Ovary (tissue), 10 donors: ENCODE measurements at regions of chr2 and their contacts with region 1.

Region 1: GRCh38 chr2:219521066-219521880 is 7.0 kb downstream of the ASIC4 start:
- DNase-seq: no peak
- H3K4me3 ChIP-seq: no peak overlapping the region
- H3K27ac ChIP-seq: no peak overlapping the region
- H3K4me1 ChIP-seq: no peaks in the 10 kb centered on the region
- H3K27me3 ChIP-seq: no peaks in the 10 kb centered on the region
- CTCF ChIP-seq: peak in 2 of 3 donors; percentile 44 to 48
- EP300 ChIP-seq: no peak
- POLR2A ChIP-seq: no peak

Region 2: DNA sequence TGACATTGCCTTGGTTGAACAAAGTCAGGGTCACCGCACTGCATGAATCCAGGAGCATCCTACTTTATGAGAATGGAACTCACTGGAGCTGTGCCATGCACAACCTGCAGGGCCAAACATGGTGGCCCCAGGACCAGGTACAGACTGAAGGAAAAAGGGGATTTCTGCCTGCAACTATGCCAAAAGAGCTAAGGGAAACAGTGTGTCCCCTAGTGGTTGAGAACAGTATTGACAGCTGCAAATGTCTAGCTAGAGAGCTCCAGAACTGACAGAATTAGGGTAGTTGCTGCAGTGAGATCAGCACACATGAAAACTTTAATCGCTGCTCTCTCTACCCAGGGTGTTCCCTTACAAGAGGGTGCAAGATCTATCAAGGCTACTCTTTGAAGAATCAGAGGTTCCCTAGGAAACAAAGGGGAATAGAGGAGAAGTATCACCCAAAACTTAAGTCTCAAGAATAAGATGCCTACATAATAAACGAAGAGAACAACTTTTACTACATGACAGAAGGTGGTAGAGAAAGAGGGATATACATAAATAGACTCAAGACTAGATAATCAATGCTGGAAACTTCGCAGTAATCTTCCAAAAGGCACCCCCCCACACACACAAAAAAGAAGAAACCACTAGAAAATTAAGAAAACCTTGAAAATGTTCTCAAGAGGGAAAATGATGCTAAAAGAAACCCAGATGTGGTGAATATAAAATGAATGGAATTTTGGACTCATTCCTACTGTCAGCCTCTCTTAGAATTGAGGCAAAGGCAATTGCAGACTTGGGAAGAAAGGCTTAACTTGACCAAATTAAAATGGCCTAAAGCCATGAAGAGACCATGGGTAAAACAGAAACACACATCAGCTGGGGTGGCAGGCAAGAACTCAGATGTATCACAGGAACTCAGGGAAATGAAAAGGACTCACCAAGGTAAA is 416.9 kb before region 1 on chr2:
- intact Hi-C with region 1: no loop called
- DNase-seq: no peak
- H3K4me3 ChIP-seq: no peak overlapping the region
- H3K27ac ChIP-seq: no peak overlapping the region
- H3K4me1 ChIP-seq: no peaks in the 10 kb centered on the region
- H3K27me3 ChIP-seq: no peaks in the 10 kb centered on the region
- CTCF ChIP-seq: no peak
- EP300 ChIP-seq: no peak
- POLR2A ChIP-seq: no peak

Region 3: GRCh38 chr2:219278655-219279516 is 242.4 kb before region 1 on chr2 and contains the start of gene DNAJB2:
- intact Hi-C with region 1: loop called in 2 of 4 experiments (anchors 10 kb)
- DNase-seq: peak; percentile 99 to 100 (median 99)
- H3K4me3 ChIP-seq: peak within 1 kb of the TSS; percentile 53
- H3K27ac ChIP-seq: peak within 1 kb of the TSS; percentile 98
- H3K4me1 ChIP-seq: peaks cover 8% of the 10 kb centered on the region
- H3K27me3 ChIP-seq: no peaks in the 10 kb centered on the region
- CTCF ChIP-seq: no peak
- EP300 ChIP-seq: peak; percentile 82
- POLR2A ChIP-seq: peak; percentile 87
- total RNA-seq, gene DNAJB2: 34.0 to 101 (median 85.7) TPM

Region 4: GRCh38 chr2:219470429-219470828 is 50.8 kb before region 1 on chr2:
- intact Hi-C with region 1: loop called in 2 of 4 experiments (anchors 5 to 10 kb)
- DNase-seq: no peak
- H3K4me3 ChIP-seq: no peak overlapping the region
- H3K27ac ChIP-seq: no peak overlapping the region
- H3K4me1 ChIP-seq: no peaks in the 10 kb centered on the region
- H3K27me3 ChIP-seq: no peaks in the 10 kb centered on the region
- CTCF ChIP-seq: no peak
- EP300 ChIP-seq: no peak
- POLR2A ChIP-seq: no peak

Region 5: GRCh38 chr2:219475697-219476651 is 45.3 kb before region 1 on chr2:
- intact Hi-C with region 1: loop called in 2 of 4 experiments (anchors 5 to 10 kb)
- DNase-seq: peak; percentile 68 to 86 (median 82)
- H3K4me3 ChIP-seq: no peak overlapping the region
- H3K27ac ChIP-seq: no peak overlapping the region
- H3K4me1 ChIP-seq: peaks cover 3% of the 10 kb centered on the region
- H3K27me3 ChIP-seq: no peaks in the 10 kb centered on the region
- CTCF ChIP-seq: peak; percentile 76 to 82 (median 80)
- EP300 ChIP-seq: no peak
- POLR2A ChIP-seq: no peak

Region 6: DNA sequence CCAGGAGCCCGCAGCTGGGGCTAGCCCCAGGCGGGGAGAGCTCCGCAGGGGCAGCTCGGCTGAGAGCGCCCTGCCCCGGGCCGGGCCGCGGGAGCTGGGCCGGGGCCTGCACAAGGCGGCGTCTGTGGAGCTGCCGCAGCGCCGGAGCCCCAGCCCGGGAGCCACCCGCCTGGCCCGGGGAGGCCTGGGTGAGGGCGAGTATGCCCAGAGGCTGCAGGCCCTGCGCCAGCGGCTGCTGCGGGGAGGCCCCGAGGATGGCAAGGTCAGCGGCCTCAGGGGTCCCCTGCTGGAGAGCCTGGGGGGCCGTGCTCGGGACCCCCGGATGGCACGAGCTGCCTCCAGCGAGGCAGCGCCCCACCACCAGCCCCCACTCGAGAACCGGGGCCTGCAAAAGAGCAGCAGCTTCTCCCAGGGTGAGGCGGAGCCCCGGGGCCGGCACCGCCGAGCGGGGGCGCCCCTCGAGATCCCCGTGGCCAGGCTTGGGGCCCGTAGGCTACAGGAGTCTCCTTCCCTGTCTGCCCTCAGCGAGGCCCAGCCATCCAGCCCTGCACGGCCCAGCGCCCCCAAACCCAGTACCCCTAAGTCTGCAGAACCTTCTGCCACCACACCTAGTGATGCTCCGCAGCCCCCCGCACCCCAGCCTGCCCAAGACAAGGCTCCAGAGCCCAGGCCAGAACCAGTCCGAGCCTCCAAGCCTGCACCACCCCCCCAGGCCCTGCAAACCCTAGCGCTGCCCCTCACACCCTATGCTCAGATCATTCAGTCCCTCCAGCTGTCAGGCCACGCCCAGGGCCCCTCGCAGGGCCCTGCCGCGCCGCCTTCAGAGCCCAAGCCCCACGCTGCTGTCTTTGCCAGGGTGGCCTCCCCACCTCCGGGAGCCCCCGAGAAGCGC is 37.6 kb before region 1 on chr2:
- intact Hi-C with region 1: loop called in 2 of 4 experiments (anchors 2 to 10 kb)
- DNase-seq: no peak
- H3K4me3 ChIP-seq: no peak overlapping the region
- H3K27ac ChIP-seq: no peak overlapping the region
- H3K4me1 ChIP-seq: peaks cover 1% of the 10 kb centered on the region
- H3K27me3 ChIP-seq: no peaks in the 10 kb centered on the region
- CTCF ChIP-seq: no peak
- EP300 ChIP-seq: no peak
- POLR2A ChIP-seq: no peak

Region 7: GRCh38 chr2:219581411-219581810 is 60.1 kb after region 1 on chr2:
- intact Hi-C with region 1: no loop called
- DNase-seq: no peak
- H3K4me3 ChIP-seq: no peak overlapping the region
- H3K27ac ChIP-seq: no peak overlapping the region
- H3K4me1 ChIP-seq: no peaks in the 10 kb centered on the region
- H3K27me3 ChIP-seq: no peaks in the 10 kb centered on the region
- CTCF ChIP-seq: no peak
- EP300 ChIP-seq: no peak
- POLR2A ChIP-seq: no peak